ENCODE measurements at regions of chr19 and their contacts with region 1.

Region 1: DNA sequence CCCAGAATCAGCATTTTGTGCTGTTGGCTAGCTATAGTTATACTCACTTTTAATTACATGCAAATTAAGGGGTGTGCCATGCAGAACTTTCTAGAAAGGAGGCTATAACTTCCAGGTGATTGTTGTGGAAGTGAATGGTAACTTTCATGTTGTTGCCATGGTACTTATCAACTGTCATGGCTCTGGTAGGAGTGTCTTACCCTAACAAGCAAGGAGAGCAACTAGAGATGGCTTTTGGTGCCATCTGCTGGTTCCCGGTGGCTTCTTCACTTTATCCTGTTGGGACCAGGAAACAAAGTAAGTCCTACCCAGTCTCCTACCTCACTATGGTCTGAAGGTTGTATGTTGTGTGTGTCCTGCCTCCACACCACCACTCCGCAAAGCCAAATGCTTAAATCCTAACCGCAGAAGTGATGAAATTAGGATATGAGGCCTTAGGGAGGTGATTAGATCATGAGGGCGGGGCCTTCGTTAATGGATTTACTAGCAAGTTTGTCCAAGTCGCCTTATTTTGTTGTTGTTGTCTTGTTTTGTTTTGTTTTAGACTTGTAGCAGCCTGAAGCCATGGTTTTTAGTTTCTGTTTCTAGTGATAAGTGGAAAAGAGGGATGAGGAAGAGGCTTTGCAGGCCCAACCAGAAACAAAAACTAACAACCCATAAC is 22.6 kb downstream of the FBXL12 start:
- DNase-seq: peak; percentile 86

Region 2: GRCh38 chr19:9140159-9140874 is 655.9 kb before region 1 on chr19 and contains the start of gene ZNF317:
- intact Hi-C with region 1: loop called (anchors 10 kb)
- DNase-seq: peak; percentile 96
- total RNA-seq, gene ZNF317: 13.8 TPM

Region 3: GRCh38 chr19:9309974-9310446 is 486.2 kb before region 1 on chr19:
- intact Hi-C with region 1: loop called (anchors 10 kb)
- DNase-seq: peak; percentile 94

Region 4: DNA sequence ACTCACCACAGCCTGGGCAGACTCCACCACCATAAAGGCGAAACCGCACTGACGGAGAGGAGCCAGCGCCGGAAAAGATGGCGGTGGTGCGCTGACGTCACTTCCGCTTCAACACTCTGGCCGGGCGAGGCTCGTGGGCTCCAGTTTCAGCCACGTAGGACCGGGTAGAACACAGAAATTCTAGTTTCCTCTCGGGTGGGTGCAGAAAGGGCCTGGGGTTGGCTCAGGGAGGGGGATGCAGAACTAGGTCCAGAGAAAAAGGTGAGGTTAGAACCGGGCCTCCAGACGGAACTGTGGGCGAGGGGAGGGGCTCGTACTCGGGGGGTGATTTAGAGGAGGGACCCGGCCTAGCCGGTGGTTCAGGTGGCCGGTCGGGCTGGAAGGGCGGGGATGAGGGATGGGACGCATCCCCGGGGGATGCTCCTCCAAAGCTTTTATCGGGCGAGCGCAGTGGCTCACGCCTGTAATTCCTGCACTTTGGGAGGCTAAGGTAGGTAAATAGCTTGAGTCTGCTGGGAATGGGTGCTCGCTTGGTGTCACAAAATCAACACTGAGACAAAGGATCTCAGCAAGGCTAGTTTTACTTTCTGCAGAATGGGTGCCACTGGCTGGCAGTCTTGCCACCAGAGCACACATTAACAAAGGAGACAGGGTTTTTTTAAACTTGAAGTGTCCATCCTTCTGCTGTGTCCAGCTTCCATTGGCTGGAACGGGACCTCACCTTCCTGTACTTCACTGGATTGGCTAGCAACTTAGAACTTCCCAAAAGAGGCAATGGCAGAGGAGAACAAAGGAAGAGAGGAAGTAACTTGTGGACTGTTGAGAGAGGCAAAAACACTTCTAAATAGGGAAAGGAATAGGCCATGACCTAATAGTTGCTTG is 174.8 kb before region 1 on chr19 and contains the start of gene ZNF561:
- intact Hi-C with region 1: loop called (anchors 2 kb)
- DNase-seq: peak; percentile 94
- total RNA-seq, gene ZNF561: 27.4 TPM

Region 5: DNA sequence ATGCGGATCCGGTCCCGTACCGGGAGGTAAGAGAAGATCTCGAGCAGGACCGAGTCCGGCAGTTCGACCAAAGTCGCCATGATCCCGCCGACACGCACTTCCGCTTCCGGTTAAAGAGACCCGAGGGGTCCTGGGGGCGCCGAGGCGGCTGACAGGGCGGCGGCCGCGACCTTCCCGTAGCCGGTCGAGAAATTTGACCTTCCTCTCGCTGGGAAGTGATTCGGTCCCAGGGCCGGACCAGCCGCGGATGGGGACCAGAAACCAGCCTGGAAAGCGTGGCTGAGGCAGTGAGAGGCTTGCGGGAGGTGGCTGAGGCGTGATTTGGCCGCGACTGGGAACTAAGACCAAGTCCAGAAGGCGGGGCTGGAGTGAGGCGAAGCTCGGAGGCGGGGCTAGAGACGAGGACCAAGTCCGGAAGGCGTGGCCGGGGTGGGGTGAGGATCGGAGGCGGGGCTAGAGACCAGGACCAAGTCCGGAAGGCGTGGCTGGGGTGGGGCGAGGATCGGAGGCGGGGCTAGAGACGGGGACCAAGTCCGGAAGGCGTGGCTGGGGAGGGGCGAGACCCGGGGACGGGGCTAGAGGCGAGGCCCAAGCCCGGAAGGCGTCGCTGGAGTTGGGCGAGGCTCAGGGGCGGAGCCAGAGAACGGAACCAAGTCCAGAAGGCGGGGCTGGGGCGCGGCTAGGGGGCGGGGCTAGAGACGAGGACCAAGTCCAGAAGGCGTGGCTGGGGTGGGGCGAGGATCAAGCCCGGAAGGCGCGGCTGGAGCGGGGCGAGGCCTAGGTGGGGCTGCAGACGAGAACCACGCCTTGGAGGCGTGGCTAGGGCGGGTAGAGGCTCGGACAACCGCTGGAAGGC is 22.7 kb after region 1 on chr19 and contains the start of gene FBXL12:
- intact Hi-C with region 1: loop called (anchors 1 kb)
- DNase-seq: peak; percentile 100
- total RNA-seq, gene FBXL12: 17.0 TPM

Measured in cardiac septum (tissue), 1 donor.